ENCODE measurements at regions of chr10 and their contacts with region 1.

Region 1: DNA sequence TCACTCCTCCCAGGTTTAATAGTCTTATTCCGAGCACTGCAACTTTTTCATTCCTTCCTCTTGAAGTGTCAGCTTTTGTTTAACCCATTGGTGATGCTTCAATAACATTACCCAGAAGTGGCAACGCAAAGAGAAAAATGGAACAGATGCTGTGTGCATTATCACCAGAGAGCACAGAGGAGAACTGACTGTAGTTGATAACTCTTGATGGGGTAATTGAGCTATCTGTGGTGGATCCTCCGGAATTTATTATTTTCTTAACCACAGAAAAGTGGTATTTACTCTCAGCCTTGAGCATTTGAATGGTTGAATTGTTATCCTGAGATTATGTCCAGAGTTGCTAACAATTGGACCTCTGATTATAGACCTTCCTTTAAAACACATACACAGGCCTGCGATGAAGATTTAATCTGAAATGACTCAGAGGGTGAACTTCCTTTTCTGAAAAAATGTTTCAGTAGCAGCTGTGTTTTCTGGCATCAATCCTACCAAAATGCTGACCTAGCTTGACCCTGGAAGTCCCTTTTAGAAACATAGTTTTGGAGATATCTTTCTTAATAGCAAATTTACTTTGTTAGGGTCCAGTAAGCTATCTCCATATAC is 1584.4 kb upstream of the LRRTM3 start:
- DNase-seq: peak in 1 of 2 donors; percentile 69
- ATAC-seq: peak; percentile 78 to 97 (median 87)
- H3K4me3 ChIP-seq: no peak overlapping the region
- H3K27ac ChIP-seq: peak overlapping the region in 8 of 10 donors; percentile 12 to 68 (median 46)
- H3K4me1 ChIP-seq: peaks cover 0 to 34% (median 22%) of the 10 kb centered on the region in 9 donors
- H3K27me3 ChIP-seq: no peaks in the 10 kb centered on the region
- CTCF ChIP-seq: no peak

Region 2: GRCh38 chr10:65565246-65565645 is 223.8 kb after region 1 on chr10:
- intact Hi-C with region 1: loop called in 1 of 10 experiments (anchors 10 kb)
- DNase-seq: no peak
- ATAC-seq: no peak
- H3K4me3 ChIP-seq: no peak overlapping the region
- H3K27ac ChIP-seq: no peak overlapping the region
- H3K4me1 ChIP-seq: peaks cover 0 to 3% (median 0%) of the 10 kb centered on the region in 9 donors
- H3K27me3 ChIP-seq: no peaks in the 10 kb centered on the region
- CTCF ChIP-seq: no peak

Region 3: GRCh38 chr10:65751218-65751617 is 409.8 kb after region 1 on chr10:
- intact Hi-C with region 1: no loop called
- DNase-seq: no peak
- ATAC-seq: no peak
- H3K4me3 ChIP-seq: no peak overlapping the region
- H3K27ac ChIP-seq: no peak overlapping the region
- H3K4me1 ChIP-seq: no peaks in the 10 kb centered on the region
- H3K27me3 ChIP-seq: no peaks in the 10 kb centered on the region
- CTCF ChIP-seq: no peak